ENCODE measurements at regions of chr5 and their contacts with region 1.

Region 1: GRCh38 chr5:141650851-141651727 is at the start of gene FCHSD1:
- DNase-seq: peak; percentile 75 to 81 (median 76)
- H3K4me3 ChIP-seq: peak within 1 kb of the TSS; percentile 42 to 74
- H3K4me3 Mint-ChIP-seq: peak within 1 kb of the TSS; percentile 87 to 96 (median 93)
- H3K27ac ChIP-seq: peak within 1 kb of the TSS; percentile 50
- H3K27ac Mint-ChIP-seq: peak within 1 kb of the TSS; percentile 86 to 97 (median 94)
- H3K4me1 ChIP-seq: peaks cover 29% of the 10 kb centered on the region
- H3K4me1 Mint-ChIP-seq: peaks cover 27 to 49% (median 38%) of the 10 kb centered on the region in 4 donors
- H3K27me3 ChIP-seq: no peaks in the 10 kb centered on the region
- H3K27me3 Mint-ChIP-seq: no peaks in the 10 kb centered on the region
- total RNA-seq, gene FCHSD1: 106 to 110 TPM

Region 2: DNA sequence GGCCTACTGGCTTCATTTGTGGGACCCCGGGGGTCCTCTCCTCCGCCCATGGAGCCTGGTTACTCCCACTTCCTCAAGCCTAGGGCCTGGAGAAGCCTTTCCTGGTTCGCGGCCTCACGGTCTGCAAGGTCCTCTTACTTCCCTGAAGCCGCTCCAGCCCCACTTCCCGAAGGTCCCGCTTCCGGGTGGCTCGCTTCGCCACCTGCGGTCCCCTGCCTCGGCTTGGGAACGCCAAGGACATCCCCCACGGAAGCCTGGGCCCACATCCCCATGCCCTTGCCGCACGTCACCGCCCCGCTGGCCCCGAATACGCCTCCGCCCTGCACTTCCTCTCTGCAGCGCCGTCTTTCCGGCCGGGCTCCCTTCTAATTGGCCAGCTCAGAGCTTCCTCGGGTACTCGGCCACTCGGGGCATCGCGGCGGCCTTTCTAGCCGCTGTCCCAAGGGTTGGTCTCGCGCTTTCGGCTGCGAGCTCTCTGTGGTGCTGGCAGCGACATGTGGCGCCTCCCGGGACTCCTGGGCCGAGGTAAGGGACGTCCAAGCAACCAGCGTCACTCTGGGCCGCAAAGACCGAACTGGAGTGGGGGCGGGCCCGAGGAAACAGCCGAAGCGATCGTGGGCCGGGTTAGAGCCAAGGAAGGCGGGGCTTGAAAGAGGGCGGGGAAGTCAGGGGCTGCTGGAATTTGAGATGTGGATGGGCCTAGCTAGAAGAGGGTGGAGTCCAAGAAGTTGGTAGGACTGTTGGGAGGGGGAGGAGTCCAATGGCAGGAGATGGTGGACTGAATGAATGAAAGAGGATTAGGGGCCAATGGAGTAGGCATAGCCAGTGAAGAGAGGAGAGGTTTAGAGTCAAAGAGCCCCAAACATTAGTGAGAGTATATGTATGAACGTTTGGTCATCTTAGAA is 272.6 kb after region 1 on chr5 and contains the start of gene DELE1:
- CTCF ChIA-PET with region 1: no interaction called
- POLR2A ChIA-PET with region 1: interaction called, 10 read pairs
- intact Hi-C with region 1: no loop called
- DNase-seq: peak; percentile 89 to 92 (median 92)
- H3K4me3 ChIP-seq: peak within 1 kb of the TSS; percentile 76 to 93
- H3K4me3 Mint-ChIP-seq: peak within 1 kb of the TSS; percentile 87 to 97 (median 92)
- H3K27ac ChIP-seq: peak within 1 kb of the TSS; percentile 99
- H3K27ac Mint-ChIP-seq: peak within 1 kb of the TSS; percentile 95 to 98 (median 97)
- H3K4me1 ChIP-seq: peaks cover 31% of the 10 kb centered on the region
- H3K4me1 Mint-ChIP-seq: peaks cover 14 to 48% (median 34%) of the 10 kb centered on the region in 4 donors
- H3K27me3 ChIP-seq: no peaks in the 10 kb centered on the region
- H3K27me3 Mint-ChIP-seq: no peaks in the 10 kb centered on the region
- total RNA-seq, gene DELE1: 73.2 to 83.1 TPM

Measured in CD4-positive, alpha-beta memory T cell (primary cell).